HepG2 (cell line): ENCODE measurements at regions of chr11 and their contacts with region 1.

Region 1: GRCh38 chr11:82698576-82699352 is 34.9 kb downstream of the FAM181B start:
- DNase-seq: no peak
- ATAC-seq: no peak
- H3K4me3 ChIP-seq: no peak overlapping the region
- H3K27ac ChIP-seq: no peak overlapping the region
- H3K4me1 ChIP-seq: no peaks in the 10 kb centered on the region
- H3K27me3 ChIP-seq: no peaks in the 10 kb centered on the region
- CTCF ChIP-seq: no peak
- EP300 ChIP-seq: no peak
- POLR2A ChIP-seq: no peak
- RAD21 ChIP-seq: no peak

Region 2: DNA sequence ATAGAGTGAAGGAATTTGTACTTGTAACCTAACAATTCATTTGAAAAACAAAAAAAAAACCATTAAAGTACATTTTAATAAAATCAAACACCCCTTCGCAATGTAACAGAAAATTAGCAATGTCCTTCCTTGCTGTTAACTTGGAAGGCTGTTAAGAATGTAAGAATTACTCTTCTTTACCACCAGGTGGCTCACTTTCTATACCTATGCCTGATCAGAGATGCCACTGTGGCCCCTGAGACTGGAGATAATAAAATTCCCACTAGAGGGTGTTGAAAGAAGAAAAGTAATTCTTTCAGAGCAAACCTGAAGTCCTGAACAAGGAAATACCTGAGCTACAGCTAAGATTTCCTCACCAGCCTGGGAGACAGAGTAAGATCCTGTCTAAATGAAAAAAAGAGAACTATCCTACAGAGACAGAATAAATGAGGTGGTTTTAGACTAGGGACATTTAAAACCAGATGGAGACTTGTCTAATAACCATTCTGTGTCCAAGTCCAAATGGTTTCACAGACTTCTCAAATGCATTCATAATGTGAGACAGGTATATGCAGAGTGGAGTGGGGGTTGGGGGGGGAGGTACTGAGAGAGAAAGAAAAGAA is 1054.4 kb before region 1 on chr11:
- CTCF ChIA-PET with region 1: interaction called, 3 read pairs
- POLR2A ChIA-PET with region 1: no interaction called
- in situ Hi-C with region 1: loop called (anchors 25 kb)
- intact Hi-C with region 1: loop called (anchors 1 kb)
- DNase-seq: peak; percentile 60
- ATAC-seq: peak; percentile 93
- H3K4me3 ChIP-seq: no peak overlapping the region
- H3K27ac ChIP-seq: no peak overlapping the region
- H3K4me1 ChIP-seq: no peaks in the 10 kb centered on the region
- H3K27me3 ChIP-seq: no peaks in the 10 kb centered on the region
- CTCF ChIP-seq: peak; percentile 67
- EP300 ChIP-seq: no peak
- POLR2A ChIP-seq: no peak
- RAD21 ChIP-seq: peak; percentile 20; the same call in 1 of the 2 replicates

Region 3: GRCh38 chr11:82315093-82315492 is 383.7 kb before region 1 on chr11:
- CTCF ChIA-PET with region 1: interaction called, 5 read pairs
- POLR2A ChIA-PET with region 1: no interaction called
- in situ Hi-C with region 1: no loop called
- intact Hi-C with region 1: loop called (anchors 1 kb)
- DNase-seq: peak; percentile 23
- ATAC-seq: peak; percentile 97
- H3K4me3 ChIP-seq: no peak overlapping the region
- H3K27ac ChIP-seq: no peak overlapping the region
- H3K4me1 ChIP-seq: no peaks in the 10 kb centered on the region
- H3K27me3 ChIP-seq: no peaks in the 10 kb centered on the region
- CTCF ChIP-seq: peak; percentile 73
- EP300 ChIP-seq: no peak
- POLR2A ChIP-seq: no peak
- RAD21 ChIP-seq: peak; percentile 33; the same call in 1 of the 2 replicates

Region 4: GRCh38 chr11:82494988-82495432 is 203.8 kb before region 1 on chr11:
- CTCF ChIA-PET with region 1: no interaction called
- POLR2A ChIA-PET with region 1: no interaction called
- in situ Hi-C with region 1: no loop called
- intact Hi-C with region 1: loop called (anchors 1 kb)
- DNase-seq: peak; percentile 14
- ATAC-seq: peak; percentile 89
- H3K4me3 ChIP-seq: no peak overlapping the region
- H3K27ac ChIP-seq: no peak overlapping the region
- H3K4me1 ChIP-seq: no peaks in the 10 kb centered on the region
- H3K27me3 ChIP-seq: no peaks in the 10 kb centered on the region
- CTCF ChIP-seq: peak; percentile 48
- EP300 ChIP-seq: no peak
- POLR2A ChIP-seq: no peak
- RAD21 ChIP-seq: no peak

Region 5: DNA sequence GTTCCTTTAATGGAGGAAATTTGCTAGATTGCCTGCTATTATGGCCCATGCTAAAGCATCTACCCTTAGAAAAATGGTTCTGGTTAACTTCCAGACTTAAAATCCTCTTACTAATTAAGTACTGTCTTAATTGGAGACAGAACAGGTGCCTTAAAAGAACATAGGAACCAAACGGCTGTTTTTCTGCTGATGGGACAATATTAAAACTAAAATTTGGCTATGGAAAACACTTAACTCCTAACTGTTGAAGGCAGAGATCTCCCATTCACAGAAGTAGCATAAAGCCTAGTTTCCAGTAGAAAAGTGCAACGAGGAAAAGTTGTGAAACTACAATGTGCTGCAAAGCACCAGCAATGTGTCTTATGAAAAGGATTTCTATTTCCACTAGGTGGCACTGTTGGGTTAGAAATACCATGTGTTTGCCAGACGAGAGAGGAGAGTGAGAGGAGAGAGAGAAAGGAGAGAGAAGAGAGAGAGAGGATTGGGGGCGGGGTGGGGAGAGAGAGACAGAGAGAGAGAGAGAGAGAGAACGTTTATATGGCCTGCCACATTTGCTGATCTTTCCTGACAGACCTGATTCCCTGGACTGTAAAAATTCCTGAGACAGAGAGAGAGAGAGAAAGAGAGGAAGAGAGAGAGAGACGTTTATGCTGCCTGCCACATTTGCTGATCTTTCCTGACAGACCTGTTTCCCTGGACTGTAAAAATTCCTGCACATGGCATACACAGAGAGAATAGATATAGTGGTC is 16.6 kb before region 1 on chr11:
- CTCF ChIA-PET with region 1: interaction called, 28 read pairs
- POLR2A ChIA-PET with region 1: no interaction called
- in situ Hi-C with region 1: no loop called
- intact Hi-C with region 1: loop called (anchors 1 kb)
- DNase-seq: peak; percentile 67
- ATAC-seq: peak; percentile 96
- H3K4me3 ChIP-seq: no peak overlapping the region
- H3K27ac ChIP-seq: no peak overlapping the region
- H3K4me1 ChIP-seq: no peaks in the 10 kb centered on the region
- H3K27me3 ChIP-seq: no peaks in the 10 kb centered on the region
- CTCF ChIP-seq: peak; percentile 82
- EP300 ChIP-seq: no peak
- POLR2A ChIP-seq: no peak
- RAD21 ChIP-seq: peak; percentile 46; the same call in 1 of the 2 replicates